AG04450 (cell line): ENCODE measurements at regions of chr15 and their contacts with region 1.

Region 1: DNA sequence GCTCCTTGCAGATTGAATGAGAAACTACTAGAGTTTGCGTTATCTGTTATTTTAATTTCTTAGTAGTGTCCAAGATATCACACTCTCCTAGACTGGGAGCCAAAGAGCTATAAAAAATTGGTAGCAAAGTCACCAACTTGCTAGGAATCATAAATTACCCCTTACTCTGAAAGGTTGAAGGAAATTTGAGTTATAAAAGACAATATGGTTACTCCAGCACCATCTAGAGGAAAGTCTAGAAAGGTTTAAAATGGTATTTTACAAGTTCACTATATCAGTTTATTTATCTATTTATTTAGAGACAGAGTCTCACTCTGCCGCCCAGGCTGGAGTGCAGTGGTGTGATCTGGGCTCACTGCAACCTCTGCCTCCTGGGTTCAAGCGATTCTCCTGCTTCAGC is 121.6 kb downstream of the RBPMS2 start:
- DNase-seq: no peak
- H3K4me3 ChIP-seq: no peak overlapping the region
- H3K27ac ChIP-seq: no peak overlapping the region
- H3K27me3 ChIP-seq: no peaks in the 10 kb centered on the region
- CTCF ChIP-seq: peak; percentile 44

Region 2: DNA sequence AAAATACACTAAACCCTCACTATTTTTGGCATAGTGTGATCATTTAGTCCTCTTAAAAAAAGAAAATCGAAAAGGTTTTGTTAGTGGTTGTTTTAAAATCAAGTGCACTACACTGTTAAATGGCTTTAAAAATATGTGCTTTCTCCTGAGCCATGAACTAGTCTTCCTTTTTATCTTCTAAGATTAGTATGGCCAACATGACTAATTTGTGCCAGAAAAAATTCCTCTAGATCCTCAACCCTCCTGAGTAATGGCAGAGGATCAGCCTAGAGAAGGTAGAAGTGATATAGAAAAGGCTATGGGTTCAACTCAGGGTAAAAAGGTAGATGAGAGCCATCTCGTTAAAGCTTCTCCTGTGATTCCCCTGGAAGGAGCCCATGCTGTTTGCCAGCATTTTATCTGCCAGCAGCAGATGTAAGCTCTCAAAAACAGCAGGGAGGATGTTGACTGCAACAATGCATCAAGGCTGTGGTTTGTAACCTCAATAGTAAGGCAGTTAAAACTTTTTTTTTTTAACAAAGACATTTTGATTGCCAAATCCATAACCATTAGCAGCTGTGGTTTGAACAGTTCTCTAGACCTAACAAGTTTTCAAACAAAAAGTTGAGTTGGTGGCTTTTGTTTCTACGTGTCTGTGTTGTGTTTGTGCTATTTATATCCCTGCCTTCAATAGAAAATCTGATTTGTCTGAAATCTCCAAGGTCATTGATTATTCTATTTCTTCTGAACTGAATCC is 223.6 kb before region 1 on chr15:
- CTCF ChIA-PET with region 1: interaction called, 22 read pairs
- POLR2A ChIA-PET with region 1: no interaction called
- DNase-seq: peak; percentile 91
- H3K4me3 ChIP-seq: no peak overlapping the region
- H3K27ac ChIP-seq: peak overlapping the region; percentile 57
- H3K27me3 ChIP-seq: no peaks in the 10 kb centered on the region
- CTCF ChIP-seq: no peak

Region 3: DNA sequence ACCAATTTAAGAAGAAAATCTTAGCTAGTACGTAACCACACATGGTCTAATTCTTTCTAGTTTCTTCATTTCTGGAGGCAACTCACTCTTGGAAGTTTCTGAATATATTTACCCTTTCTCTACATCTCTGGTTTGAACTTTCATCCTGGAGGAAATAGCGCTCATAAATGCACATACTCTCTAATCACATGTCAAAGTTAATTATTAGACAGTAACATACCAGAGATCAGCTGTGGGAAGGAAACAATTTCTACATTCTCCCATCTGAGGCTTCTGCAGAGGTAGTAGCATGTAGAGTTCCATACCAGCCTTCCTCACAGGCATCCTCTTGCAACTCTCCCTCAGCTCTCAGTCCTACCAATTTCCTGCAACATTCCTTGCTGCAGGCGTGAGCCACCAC is 10.9 kb before region 1 on chr15:
- CTCF ChIA-PET with region 1: interaction called, 11 read pairs
- POLR2A ChIA-PET with region 1: no interaction called
- DNase-seq: no peak
- H3K4me3 ChIP-seq: no peak overlapping the region
- H3K27ac ChIP-seq: no peak overlapping the region
- H3K27me3 ChIP-seq: no peaks in the 10 kb centered on the region
- CTCF ChIP-seq: no peak

Region 4: GRCh38 chr15:64717735-64718495 is 64.2 kb after region 1 on chr15:
- CTCF ChIA-PET with region 1: no interaction called
- POLR2A ChIA-PET with region 1: no interaction called
- DNase-seq: no peak
- H3K4me3 ChIP-seq: no peak overlapping the region
- H3K27ac ChIP-seq: no peak overlapping the region
- H3K27me3 ChIP-seq: no peaks in the 10 kb centered on the region
- CTCF ChIP-seq: no peak

Region 5: DNA sequence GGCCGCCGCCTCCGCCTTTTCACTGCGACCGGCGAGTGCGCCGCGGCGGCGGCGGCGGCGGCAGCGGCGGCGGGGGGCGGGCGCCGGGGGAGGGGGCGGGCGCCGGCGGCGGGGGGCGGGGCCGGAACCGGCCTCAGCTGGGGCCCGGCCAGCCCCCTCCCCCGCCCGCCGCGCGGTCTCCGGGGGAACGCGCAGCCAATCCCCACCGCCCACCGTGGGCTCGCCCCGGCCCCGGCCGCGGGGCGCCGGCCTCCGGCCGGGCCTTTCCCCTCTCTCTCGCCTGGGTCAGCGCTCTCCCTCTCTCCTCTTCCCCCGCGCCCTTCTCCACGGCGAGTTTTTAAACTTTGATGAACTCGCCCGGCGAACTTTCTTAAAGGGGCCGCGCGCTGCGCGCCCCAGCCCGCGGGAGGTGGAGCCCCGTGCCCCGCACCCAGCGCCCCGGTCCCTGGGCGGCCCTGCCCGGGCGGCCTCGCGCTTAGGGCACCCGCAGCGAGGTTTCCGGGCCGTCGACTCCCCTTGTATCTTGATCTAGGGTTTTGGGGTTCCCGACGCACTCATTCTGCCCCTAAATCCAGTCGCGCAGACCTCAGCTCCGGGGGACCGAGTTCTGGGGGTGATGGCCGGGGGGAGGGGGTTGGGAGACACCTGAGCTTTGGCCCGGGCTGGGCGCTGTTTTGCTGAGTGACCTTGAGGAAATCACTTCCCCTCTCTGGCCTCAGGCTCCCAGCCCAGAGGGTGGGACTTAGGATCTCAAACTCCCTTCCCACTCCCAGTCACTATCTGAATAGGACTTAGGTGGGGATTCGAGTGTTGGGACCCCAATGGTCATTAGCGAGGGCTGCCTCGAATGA is 122.0 kb after region 1 on chr15 and contains the start of gene RBPMS2:
- CTCF ChIA-PET with region 1: no interaction called
- POLR2A ChIA-PET with region 1: no interaction called
- DNase-seq: no peak
- H3K4me3 ChIP-seq: peak within 1 kb of the TSS; percentile 60
- H3K27ac ChIP-seq: no peak within 1 kb of the TSS
- H3K27me3 ChIP-seq: peaks cover 33% of the 10 kb centered on the region
- CTCF ChIP-seq: no peak
- polyA plus RNA-seq, gene RBPMS2: 0.88 and 1.3 TPM in 2 replicates

Region 6: DNA sequence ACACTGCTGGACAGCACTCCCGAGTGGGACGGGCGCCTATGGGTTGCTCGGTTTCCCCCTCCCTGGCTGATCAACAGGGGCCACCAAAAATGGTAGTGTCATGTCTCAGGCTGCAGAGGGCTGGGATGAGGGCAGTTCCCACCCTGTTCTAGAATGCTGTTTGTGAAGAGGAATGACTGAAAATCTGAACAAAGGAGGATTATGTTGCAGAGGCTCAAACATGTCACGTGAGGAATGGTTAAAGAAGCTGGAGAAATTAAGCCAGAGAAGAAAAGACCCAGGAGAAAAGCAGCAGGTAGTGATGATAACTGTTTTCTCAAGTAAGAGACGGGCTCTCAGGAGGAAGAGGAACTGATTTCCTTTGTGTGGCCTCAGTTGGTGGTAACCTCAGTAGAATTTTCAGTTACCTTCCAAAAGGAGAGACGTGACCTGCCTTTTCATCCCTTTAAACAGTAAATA is 325.5 kb after region 1 on chr15:
- CTCF ChIA-PET with region 1: no interaction called
- POLR2A ChIA-PET with region 1: no interaction called
- DNase-seq: no peak
- H3K4me3 ChIP-seq: no peak overlapping the region
- H3K27ac ChIP-seq: no peak overlapping the region
- H3K27me3 ChIP-seq: no peaks in the 10 kb centered on the region
- CTCF ChIP-seq: no peak